ENCODE measurements at regions of chr3 and their contacts with region 1.

Region 1: DNA sequence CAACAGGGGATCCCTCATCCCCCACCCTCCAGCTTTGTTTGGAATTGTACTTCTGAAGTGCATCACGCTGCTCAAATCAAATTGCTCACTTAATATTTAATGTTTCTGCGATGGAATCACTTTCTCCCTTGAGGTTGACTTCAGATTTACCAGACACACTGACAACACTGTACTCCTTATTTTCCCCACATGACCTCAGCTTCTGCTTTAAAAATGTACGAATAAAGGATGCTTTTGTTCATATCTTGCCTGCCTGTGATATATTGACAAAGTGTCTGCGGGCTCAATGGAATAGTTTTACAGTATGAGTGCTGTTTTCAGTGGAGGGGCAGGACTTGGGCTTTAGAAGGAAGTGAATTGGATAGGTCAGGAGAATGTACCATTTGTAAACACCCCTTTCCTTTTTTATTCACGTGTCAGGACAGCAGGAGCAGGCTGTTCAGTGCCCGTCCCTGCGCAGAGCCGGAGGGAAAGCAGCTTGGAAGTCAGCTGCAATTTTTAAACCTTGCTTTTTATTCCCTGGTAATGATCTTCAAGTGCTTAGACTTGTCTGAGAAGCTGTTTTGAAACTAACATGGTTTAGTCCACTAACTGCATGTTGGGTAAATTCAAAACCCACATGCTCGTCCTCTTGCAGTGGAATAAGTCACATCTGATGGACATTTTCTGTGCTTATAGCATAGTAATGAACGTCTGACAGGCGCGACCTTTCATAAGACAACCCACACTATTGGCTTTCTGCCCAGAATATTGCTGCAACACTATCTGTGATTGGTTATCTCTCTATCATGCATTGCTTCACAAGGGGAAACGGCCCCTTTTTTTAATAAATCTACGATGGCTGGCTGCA is 29.9 kb downstream of the MBNL1 start:
- DNase-seq: peak; percentile 54
- ATAC-seq: peak; percentile 93
- H3K4me3 ChIP-seq: peak overlapping the region; percentile 45 to 65
- H3K27ac ChIP-seq: peak overlapping the region; percentile 93
- H3K4me1 ChIP-seq: peaks cover 52% of the 10 kb centered on the region
- H3K27me3 ChIP-seq: no peaks in the 10 kb centered on the region
- CTCF ChIP-seq: no peak

Region 2: DNA sequence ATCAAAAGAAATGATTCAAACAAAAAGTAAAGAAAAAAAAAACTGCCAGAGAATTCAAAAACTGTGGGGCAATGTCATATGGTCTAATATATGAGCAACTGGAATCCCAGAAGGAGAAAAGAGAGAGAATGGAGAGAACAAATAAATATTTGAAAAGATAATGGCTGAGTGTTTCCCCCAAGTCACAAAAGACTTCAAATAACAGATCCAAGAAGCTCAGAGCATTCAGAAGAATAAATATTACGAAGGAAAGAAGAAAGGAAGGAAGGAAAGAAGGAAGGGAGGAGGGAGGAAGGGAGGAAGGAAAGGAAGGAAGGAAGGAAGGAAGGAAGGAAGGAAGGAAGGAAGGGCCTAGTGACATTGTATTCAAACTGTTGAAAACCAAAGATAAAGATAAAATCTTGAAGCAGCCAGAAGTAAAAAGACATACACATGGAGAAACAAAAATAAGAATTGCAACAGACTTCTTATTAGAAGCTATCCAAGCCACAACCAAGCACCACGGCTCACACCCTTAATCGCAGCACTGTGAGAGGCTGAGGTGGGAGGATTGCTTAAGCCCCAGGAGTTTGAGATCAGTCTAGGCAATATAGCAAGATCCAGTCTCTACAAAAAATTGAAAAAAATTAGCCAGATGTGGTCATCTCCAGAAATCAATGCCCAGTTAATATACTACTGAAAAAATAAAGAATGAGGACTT is 718.9 kb before region 1 on chr3:
- CTCF ChIA-PET with region 1: no interaction called
- POLR2A ChIA-PET with region 1: interaction called, 11 read pairs
- in situ Hi-C with region 1: no loop called
- intact Hi-C with region 1: no loop called
- DNase-seq: no peak
- ATAC-seq: no peak
- H3K4me3 ChIP-seq: no peak overlapping the region
- H3K27ac ChIP-seq: no peak overlapping the region
- H3K4me1 ChIP-seq: no peaks in the 10 kb centered on the region
- H3K27me3 ChIP-seq: no peaks in the 10 kb centered on the region
- CTCF ChIP-seq: no peak

Measured in Panc1 (cell line).